IMR-90 (cell line): ENCODE measurements at regions of chr20 and their contacts with region 1.

Region 1: GRCh38 chr20:19815553-19815991 is 57.5 kb downstream of the RIN2 start:
- DNase-seq: peak; percentile 99
- ATAC-seq: peak; percentile 86
- H3K4me3 ChIP-seq: no peak overlapping the region
- H3K27ac ChIP-seq: peak overlapping the region; percentile 87
- H3K4me1 ChIP-seq: peaks cover 22% of the 10 kb centered on the region
- H3K27me3 ChIP-seq: no peaks in the 10 kb centered on the region
- CTCF ChIP-seq: no peak
- POLR2A ChIP-seq: peak; percentile 68; the same call in 1 of the 2 replicates
- RAD21 ChIP-seq: peak; percentile 25; the same call in 1 of the 2 replicates

Region 2: GRCh38 chr20:19757487-19758132 is 58.0 kb before region 1 on chr20:
- CTCF ChIA-PET with region 1: no interaction called
- POLR2A ChIA-PET with region 1: no interaction called
- dilution Hi-C with region 1: no loop called
- in situ Hi-C with region 1: no loop called
- intact Hi-C with region 1: loop called (anchors 1 kb)
- DNase-seq: peak; percentile 87
- ATAC-seq: peak; percentile 88
- H3K4me3 ChIP-seq: peak overlapping the region; percentile 72
- H3K27ac ChIP-seq: peak overlapping the region; percentile 78
- H3K4me1 ChIP-seq: peaks cover 8% of the 10 kb centered on the region
- H3K27me3 ChIP-seq: no peaks in the 10 kb centered on the region
- CTCF ChIP-seq: no peak
- POLR2A ChIP-seq: no peak
- RAD21 ChIP-seq: no peak; the same call in 1 of the 2 replicates

Region 3: GRCh38 chr20:19880256-19881079 is 64.9 kb after region 1 on chr20:
- CTCF ChIA-PET with region 1: no interaction called
- POLR2A ChIA-PET with region 1: interaction called, 5 read pairs
- dilution Hi-C with region 1: no loop called
- in situ Hi-C with region 1: loop called (anchors 5 kb)
- intact Hi-C with region 1: loop called (anchors 1 kb)
- DNase-seq: peak; percentile 89
- ATAC-seq: peak; percentile 63
- H3K4me3 ChIP-seq: peak overlapping the region; percentile 5; the same call in 1 of the 2 replicates
- H3K27ac ChIP-seq: peak overlapping the region; percentile 100
- H3K4me1 ChIP-seq: peaks cover 28% of the 10 kb centered on the region
- H3K27me3 ChIP-seq: no peaks in the 10 kb centered on the region
- CTCF ChIP-seq: no peak
- POLR2A ChIP-seq: peak; percentile 51; the same call in 1 of the 2 replicates
- RAD21 ChIP-seq: no peak

Region 4: DNA sequence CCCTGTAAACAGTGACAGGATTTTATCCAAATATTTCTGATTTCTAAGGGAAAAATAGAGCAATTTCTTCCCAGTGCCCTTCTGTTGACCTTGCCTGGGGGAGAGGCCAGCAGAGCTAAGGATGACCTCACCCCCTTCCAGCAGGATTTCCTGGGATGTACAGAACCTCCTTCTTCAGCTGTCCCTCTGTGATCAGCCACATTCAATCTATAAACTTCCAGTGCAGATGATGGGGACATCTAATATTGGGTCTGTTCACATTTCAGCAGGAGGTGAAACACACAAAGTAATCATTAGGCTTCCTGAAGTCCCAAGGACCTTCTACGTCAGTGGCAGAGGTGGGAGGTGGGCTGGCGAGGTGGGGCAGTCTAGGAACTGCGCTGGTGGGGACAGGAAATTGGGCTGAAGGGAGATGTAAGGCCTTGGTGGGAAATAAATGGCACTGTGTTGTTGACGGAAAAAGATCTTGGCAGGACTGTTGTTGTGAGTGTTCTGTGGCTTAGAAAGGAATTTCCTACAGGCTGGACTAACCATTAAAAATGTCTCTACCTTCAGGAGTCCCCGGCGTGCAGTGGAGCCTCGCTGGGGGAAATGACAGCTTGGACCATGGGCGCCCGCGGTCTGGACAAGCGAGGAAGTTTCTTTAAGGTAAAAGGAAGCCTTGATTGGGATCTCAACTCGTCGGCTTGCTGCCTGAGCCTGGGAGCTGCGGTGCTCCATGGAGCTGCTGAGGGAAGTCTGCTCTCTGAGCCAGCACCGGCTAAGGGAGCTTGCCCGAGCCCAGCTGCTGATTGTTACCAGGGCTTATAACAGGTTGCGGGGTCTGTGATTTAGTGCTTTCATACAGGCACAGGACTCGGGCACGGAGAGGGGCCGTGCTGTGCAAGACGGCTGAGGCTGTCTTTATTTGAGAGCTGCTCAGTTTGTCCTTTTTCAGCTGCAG is 73.7 kb after region 1 on chr20:
- CTCF ChIA-PET with region 1: interaction called, 3 read pairs
- POLR2A ChIA-PET with region 1: interaction called, 18 read pairs
- dilution Hi-C with region 1: no loop called
- in situ Hi-C with region 1: loop called (anchors 5 kb)
- intact Hi-C with region 1: loop called (anchors 1 kb)
- DNase-seq: peak; percentile 76
- ATAC-seq: peak; percentile 46
- H3K4me3 ChIP-seq: peak overlapping the region; percentile 57
- H3K27ac ChIP-seq: peak overlapping the region; percentile 100
- H3K4me1 ChIP-seq: peaks cover 33% of the 10 kb centered on the region
- H3K27me3 ChIP-seq: no peaks in the 10 kb centered on the region
- CTCF ChIP-seq: no peak
- POLR2A ChIP-seq: no peak
- RAD21 ChIP-seq: no peak